Ascending aorta (tissue), 2 donors: ENCODE measurements at regions of chr21 and their contacts with region 1.

Region 1: GRCh38 chr21:38567335-38567969 is 69.2 kb upstream of the ERG start:
- DNase-seq: no peak
- H3K4me3 ChIP-seq: peak overlapping the region; percentile 17 to 49
- H3K27ac ChIP-seq: peak overlapping the region; percentile 32 to 62
- H3K4me1 ChIP-seq: peaks cover 0 to 6% of the 10 kb centered on the region in 2 donors
- H3K27me3 ChIP-seq: no peaks in the 10 kb centered on the region
- CTCF ChIP-seq: no peak

Region 2: DNA sequence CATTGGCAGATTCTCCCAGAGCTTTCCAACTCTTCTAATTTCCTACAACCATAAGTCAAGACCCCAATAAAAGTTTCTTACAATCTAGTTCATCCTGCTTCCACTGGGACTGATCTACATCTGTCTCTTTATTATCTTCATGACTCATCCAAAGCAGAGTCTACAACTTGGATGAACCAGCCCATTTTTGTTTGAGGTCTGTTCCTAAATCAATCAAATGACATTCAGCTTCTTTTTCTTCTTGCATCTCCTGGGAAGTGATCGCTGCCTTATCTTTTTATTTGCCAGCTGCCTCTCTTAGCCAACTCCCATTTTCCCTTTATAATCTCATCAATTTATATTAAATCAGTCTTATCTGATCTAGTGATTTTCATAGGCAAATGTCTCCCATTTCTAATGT is 174.8 kb before region 1 on chr21:
- intact Hi-C with region 1: no loop called
- DNase-seq: no peak
- H3K4me3 ChIP-seq: no peak overlapping the region
- H3K27ac ChIP-seq: no peak overlapping the region
- H3K4me1 ChIP-seq: peaks cover 0 to 10% of the 10 kb centered on the region in 2 donors
- H3K27me3 ChIP-seq: no peaks in the 10 kb centered on the region
- CTCF ChIP-seq: no peak

Region 3: DNA sequence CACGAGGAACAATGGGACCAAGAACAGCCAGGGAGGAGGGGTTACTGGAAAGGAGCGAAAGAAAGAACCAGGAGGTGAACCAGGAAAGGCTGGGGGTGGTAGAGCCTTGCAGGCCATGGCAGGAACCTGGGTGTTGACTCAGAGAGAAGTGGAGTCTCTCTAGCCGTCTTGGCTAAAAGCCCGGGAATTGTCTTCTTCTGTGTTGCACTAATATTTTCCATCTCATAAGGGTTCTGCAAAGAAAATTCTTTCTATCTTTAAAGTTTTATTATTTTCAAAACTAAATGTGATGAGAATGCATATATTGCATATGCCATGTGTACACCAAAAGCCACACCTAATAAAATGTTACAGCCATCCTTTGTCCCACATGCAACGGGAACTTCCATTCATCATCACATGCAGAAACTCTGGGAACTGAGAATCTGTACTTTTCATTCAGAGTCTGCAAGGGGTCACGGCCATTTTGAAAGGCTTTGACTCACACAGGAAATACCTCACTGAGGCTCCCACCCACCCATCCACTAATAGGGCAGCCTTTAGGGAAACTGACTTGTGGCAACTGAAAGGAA is 107.2 kb before region 1 on chr21:
- intact Hi-C with region 1: no loop called
- DNase-seq: peak in 1 of 2 donors; percentile 88
- H3K4me3 ChIP-seq: no peak overlapping the region
- H3K27ac ChIP-seq: peak overlapping the region; percentile 77 to 94
- H3K4me1 ChIP-seq: peaks cover 22 to 59% of the 10 kb centered on the region in 2 donors
- H3K27me3 ChIP-seq: no peaks in the 10 kb centered on the region
- CTCF ChIP-seq: no peak

Region 4: GRCh38 chr21:38505654-38506515 is 61.6 kb before region 1 on chr21:
- intact Hi-C with region 1: loop called (anchors 5 kb)
- DNase-seq: no peak
- H3K4me3 ChIP-seq: peak overlapping the region; percentile 31 to 62
- H3K27ac ChIP-seq: peak overlapping the region; percentile 82 to 86
- H3K4me1 ChIP-seq: peaks cover 0 to 24% of the 10 kb centered on the region in 2 donors
- H3K27me3 ChIP-seq: no peaks in the 10 kb centered on the region
- CTCF ChIP-seq: peak; percentile 54 to 75 (median 73)

Region 5: GRCh38 chr21:38645282-38645681 is 77.8 kb after region 1 on chr21:
- intact Hi-C with region 1: loop called (anchors 5 kb)
- DNase-seq: no peak
- H3K4me3 ChIP-seq: no peak overlapping the region
- H3K27ac ChIP-seq: peak overlapping the region; percentile 68 to 71
- H3K4me1 ChIP-seq: peaks cover 2 to 53% of the 10 kb centered on the region in 2 donors
- H3K27me3 ChIP-seq: no peaks in the 10 kb centered on the region
- CTCF ChIP-seq: no peak

Region 6: GRCh38 chr21:38712071-38712470 is 144.6 kb after region 1 on chr21:
- intact Hi-C with region 1: no loop called
- DNase-seq: peak in 1 of 2 donors; percentile 75
- H3K4me3 ChIP-seq: no peak overlapping the region
- H3K27ac ChIP-seq: peak overlapping the region in 1 of 2 donors; percentile 12
- H3K4me1 ChIP-seq: no peaks in the 10 kb centered on the region
- H3K27me3 ChIP-seq: no peaks in the 10 kb centered on the region
- CTCF ChIP-seq: peak; percentile 49 to 68 (median 51)

Region 7: DNA sequence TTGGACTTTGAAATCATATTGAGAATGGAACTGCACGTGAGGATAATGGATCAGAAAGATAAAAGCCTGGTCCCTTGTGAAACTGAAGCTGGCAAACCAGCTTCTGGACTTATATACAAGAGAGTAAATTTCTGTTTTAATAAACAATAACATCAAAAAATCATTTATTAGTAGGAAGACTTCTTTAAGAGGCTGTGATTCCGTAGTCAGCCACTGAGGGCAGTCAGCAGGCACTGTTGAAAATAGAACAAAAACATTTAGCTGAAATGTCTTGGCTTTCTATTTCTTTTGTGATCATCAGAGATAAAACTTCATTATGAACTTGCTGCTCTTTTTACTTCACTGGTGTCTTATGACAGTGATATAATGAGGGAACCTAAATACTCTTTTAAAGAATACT is 1789.2 kb after region 1 on chr21:
- intact Hi-C with region 1: no loop called
- DNase-seq: no peak
- H3K4me3 ChIP-seq: no peak overlapping the region
- H3K27ac ChIP-seq: no peak overlapping the region
- H3K4me1 ChIP-seq: no peaks in the 10 kb centered on the region
- H3K27me3 ChIP-seq: no peaks in the 10 kb centered on the region
- CTCF ChIP-seq: no peak